Thyroid gland (tissue), 4 donors: ENCODE measurements at regions of chr17 and their contacts with region 1.

Region 1: DNA sequence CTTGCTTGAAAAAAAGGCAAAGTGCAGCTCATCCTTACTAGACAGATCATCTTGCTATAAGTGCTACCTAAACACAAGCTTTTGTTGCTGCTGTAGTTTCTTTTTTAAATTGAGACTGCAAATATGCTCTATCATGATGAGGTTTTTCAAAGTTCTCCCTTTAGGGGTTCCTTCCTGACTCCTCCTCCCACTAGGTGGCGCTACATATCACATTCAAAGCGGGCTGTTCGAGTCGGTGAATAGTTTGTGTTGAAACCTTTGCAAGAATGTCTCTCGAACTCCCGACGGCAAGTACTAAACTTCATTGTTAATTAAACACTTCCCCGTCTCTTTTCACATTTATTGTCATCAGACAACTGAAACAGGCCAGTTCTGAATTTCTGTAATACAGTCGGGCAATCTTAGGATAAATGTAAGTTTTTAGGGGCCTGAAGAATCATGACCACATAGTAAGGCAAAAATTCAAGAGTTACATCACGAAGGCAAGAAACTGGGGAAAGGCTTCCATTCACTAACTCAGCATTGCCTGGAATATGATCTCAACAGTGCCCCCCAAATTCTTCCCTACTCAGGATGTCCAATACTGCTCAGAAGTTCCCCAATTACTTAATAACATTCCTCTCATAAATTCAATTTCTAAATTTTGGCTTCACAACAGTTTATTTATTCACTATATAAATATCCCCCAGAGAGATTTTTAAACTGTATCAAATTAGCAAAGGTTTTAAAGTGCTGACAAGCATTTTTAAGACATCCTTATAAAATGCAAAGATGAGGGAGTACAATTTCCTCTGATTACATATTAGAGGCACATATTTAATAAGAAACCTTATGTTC is 6.7 kb downstream of the HS3ST3A1 start:
- DNase-seq: peak; percentile 61 to 73
- H3K4me3 ChIP-seq: no peak overlapping the region
- H3K27ac ChIP-seq: no peak overlapping the region
- H3K4me1 ChIP-seq: no peaks in the 10 kb centered on the region
- H3K27me3 ChIP-seq: no peaks in the 10 kb centered on the region
- CTCF ChIP-seq: peak; percentile 61 to 88 (median 67)
- POLR2A ChIP-seq: no peak

Region 2: DNA sequence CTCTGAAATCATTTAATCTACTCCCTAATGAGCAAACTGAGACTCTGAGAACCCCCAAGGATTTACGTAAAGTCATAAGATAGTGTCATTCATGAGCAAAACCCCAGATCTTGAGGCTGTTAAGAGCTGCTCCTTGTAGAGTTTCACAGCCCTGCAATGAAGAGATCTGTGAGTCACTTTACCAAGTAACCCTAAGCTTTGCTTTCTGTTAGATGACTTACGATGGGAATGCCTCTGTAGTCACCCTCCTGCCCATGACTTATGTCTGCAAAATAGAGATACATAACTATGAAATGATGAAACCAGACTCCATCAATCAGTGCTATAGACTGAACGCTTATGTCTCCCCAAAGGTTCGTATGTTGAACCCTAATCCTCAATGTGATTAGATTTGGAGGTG is 111.0 kb before region 1 on chr17:
- intact Hi-C with region 1: no loop called
- DNase-seq: no peak
- H3K4me3 ChIP-seq: no peak overlapping the region
- H3K27ac ChIP-seq: no peak overlapping the region
- H3K4me1 ChIP-seq: no peaks in the 10 kb centered on the region
- H3K27me3 ChIP-seq: no peaks in the 10 kb centered on the region
- CTCF ChIP-seq: no peak
- POLR2A ChIP-seq: no peak

Region 3: GRCh38 chr17:13626703-13627102 is 31.7 kb after region 1 on chr17:
- intact Hi-C with region 1: no loop called
- DNase-seq: no peak
- H3K4me3 ChIP-seq: no peak overlapping the region
- H3K27ac ChIP-seq: no peak overlapping the region
- H3K4me1 ChIP-seq: no peaks in the 10 kb centered on the region
- H3K27me3 ChIP-seq: no peaks in the 10 kb centered on the region
- CTCF ChIP-seq: no peak
- POLR2A ChIP-seq: no peak

Region 4: GRCh38 chr17:14926526-14927122 is 1331.6 kb after region 1 on chr17:
- intact Hi-C with region 1: loop called (anchors 10 kb)
- DNase-seq: peak; percentile 38 to 48
- H3K4me3 ChIP-seq: no peak overlapping the region
- H3K27ac ChIP-seq: no peak overlapping the region
- H3K4me1 ChIP-seq: no peaks in the 10 kb centered on the region
- H3K27me3 ChIP-seq: no peaks in the 10 kb centered on the region
- CTCF ChIP-seq: peak; percentile 48 to 73 (median 59)
- POLR2A ChIP-seq: no peak